ENCODE measurements at regions of chr2 and their contacts with region 1.

Region 1: DNA sequence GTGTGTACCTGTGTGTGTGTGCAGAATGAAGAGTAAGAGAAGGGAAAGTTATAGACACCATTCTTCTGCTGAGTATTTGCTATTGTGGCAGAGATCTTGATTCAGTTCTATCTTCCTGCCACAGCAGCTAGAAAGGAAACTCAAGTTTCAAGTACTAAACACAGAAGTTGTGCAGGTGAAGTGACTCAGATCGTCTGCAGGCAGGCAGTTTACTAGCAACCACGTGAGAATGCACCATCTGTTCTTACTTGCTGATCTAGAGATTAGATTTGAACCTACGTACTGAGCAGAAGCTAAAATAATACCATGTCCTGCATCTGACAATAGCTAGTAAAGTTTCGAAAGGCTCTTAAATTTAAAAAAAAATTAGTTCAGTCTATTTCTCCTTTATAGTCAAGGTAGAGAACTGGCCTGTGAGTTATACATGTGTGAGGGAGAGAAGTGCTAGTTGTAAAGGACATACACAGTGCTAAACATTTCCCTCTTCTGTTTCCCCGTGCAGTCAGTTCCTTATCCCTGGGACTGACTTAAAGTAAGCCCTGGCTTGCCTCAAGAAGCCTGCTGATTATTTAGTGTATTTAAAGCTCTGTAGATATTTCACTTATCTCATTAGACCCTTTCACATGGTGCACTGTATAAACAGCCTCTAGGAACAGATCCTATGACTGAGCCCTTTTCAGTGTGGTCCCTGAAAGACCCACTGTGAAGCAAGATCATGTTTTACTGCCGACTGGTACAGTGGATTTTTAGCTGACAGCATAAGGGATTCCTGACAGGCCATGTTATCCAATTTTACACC is 45.0 kb downstream of the SLC38A11 start:
- DNase-seq: peak; percentile 39
- H3K4me3 Mint-ChIP-seq: no peak overlapping the region
- H3K27ac Mint-ChIP-seq: no peak overlapping the region
- H3K4me1 Mint-ChIP-seq: peaks cover 16% of the 10 kb centered on the region
- H3K27me3 Mint-ChIP-seq: peaks cover 27% of the 10 kb centered on the region

Region 2: GRCh38 chr2:164737612-164738081 is 172.7 kb before region 1 on chr2:
- intact Hi-C with region 1: loop called (anchors 5 kb)
- DNase-seq: peak; percentile 9
- H3K4me3 Mint-ChIP-seq: no peak overlapping the region
- H3K27ac Mint-ChIP-seq: no peak overlapping the region
- H3K4me1 Mint-ChIP-seq: peaks cover 2% of the 10 kb centered on the region
- H3K27me3 Mint-ChIP-seq: peaks cover 20% of the 10 kb centered on the region

Region 3: GRCh38 chr2:164841719-164842623 is 68.3 kb before region 1 on chr2 and contains the start of gene COBLL1:
- intact Hi-C with region 1: loop called (anchors 5 kb)
- DNase-seq: peak; percentile 17
- H3K4me3 Mint-ChIP-seq: peak within 1 kb of the TSS; percentile 61
- H3K27ac Mint-ChIP-seq: no peak within 1 kb of the TSS
- H3K4me1 Mint-ChIP-seq: peaks cover 5% of the 10 kb centered on the region
- H3K27me3 Mint-ChIP-seq: peaks cover 58% of the 10 kb centered on the region
- total RNA-seq, gene COBLL1: 0.11 and 0.14 TPM in 2 replicates

Region 4: DNA sequence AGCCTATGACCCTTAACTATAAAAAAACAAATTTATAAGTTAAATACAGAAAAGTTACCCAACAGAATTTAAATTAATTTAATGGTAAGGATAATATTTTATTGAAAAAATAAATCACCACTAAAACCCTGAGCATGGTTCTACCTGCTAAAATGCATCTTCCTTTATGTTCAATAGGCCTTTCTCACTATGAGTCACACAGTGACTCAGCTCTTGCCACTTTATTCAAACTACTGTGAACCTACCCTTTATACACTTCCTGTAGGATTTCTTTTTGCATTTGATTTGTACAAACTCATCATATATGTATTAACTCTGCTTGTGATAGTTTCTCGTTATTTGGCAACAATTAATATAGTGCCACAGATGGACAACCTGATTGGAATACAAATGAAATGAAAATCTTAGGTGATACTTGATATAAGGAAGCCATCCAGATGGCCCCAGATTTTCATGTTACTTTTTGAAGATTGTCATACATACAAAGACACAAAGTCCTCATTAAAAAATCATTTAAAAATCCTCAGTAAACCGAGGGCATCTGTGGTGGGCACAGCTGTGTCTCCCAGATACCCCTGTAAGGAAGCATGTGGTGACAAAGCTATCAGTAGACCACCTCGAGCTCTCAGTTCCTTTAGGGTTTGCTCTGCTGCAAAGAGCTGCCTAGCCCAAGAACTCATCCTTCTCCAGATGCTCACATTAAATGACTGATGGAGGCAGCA is 13.5 kb before region 1 on chr2:
- intact Hi-C with region 1: loop called (anchors 1 kb)
- DNase-seq: no peak
- H3K4me3 Mint-ChIP-seq: no peak overlapping the region
- H3K27ac Mint-ChIP-seq: no peak overlapping the region
- H3K4me1 Mint-ChIP-seq: peaks cover 11% of the 10 kb centered on the region
- H3K27me3 Mint-ChIP-seq: peaks cover 10% of the 10 kb centered on the region

Region 5: DNA sequence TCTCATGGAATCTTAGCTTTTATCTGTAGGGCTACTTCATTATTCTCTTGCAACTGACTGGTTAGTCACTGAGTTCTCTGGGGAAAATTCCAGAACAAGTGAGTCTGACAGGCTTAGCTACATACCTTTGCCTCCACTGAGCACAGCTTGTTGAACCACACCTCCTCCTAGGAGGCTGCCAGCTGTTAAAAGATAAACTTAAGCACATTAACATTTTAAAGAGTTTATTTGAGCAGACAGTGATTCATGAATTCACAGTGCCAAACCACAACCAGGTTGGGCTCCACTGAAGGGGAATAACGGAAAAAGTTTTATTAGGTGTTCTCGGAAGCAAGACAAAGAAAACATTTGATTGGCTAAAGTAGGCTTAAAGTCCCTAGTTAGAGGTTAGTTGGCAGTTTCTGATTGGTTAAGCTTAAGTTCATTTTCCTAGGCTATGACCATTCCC is 57.5 kb after region 1 on chr2:
- intact Hi-C with region 1: no loop called
- DNase-seq: no peak
- H3K4me3 Mint-ChIP-seq: no peak overlapping the region
- H3K27ac Mint-ChIP-seq: no peak overlapping the region
- H3K4me1 Mint-ChIP-seq: no peaks in the 10 kb centered on the region
- H3K27me3 Mint-ChIP-seq: peaks cover 3% of the 10 kb centered on the region